Adrenal gland (tissue), 19 donors: ENCODE measurements at regions of chr1 and their contacts with region 1.

Region 1: GRCh38 chr1:172745014-172745413 is 86.1 kb downstream of the FASLG start:
- DNase-seq: peak in 5 of 7 donors; percentile 25 to 45 (median 36)
- H3K4me3 ChIP-seq: no peak overlapping the region
- H3K27ac ChIP-seq: no peak overlapping the region
- H3K4me1 ChIP-seq: peaks cover 0 to 18% of the 10 kb centered on the region in 2 donors
- H3K27me3 ChIP-seq: peaks cover 11% of the 10 kb centered on the region
- CTCF ChIP-seq: peak; percentile 40 to 80 (median 63)
- POLR2A ChIP-seq: no peak

Region 2: DNA sequence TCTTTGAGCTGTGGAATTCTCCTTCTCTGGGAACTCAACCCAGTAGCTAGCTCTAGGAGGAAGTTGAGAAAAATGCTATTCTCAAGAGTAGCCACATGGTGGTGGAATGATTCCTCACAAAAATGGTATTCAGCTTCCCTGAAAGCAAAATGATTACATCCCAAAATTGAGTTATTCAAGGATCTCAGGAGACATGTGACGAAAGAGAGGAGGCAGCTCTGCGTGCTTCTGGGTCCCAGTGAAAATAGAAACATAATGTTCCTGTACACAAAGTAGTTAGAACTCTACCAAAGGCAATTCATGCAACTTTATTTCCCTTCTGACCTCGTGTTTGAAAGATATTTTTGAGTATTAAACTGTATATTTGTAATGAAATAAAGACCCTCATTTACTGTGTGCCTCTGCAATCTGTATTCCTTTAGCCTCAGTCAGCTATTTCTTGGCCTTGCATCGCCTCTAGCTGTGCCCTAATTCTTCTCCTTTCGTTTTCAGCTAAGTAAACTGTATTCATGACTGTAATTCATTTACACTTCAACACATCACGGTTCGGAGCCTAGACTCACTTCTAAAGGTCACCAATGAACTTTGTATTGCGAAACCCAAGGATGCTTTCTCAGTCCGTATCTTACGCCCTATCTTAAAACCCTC is 81.2 kb after region 1 on chr1:
- intact Hi-C with region 1: loop called in 1 of 2 experiments (anchors 10 kb)
- DNase-seq: peak; percentile 21 to 71 (median 36)
- H3K4me3 ChIP-seq: peak overlapping the region in 1 of 4 donors; percentile 46
- H3K27ac ChIP-seq: peak overlapping the region in 2 of 5 donors; percentile 53 to 59
- H3K4me1 ChIP-seq: peaks cover 0 to 7% of the 10 kb centered on the region in 2 donors
- H3K27me3 ChIP-seq: no peaks in the 10 kb centered on the region
- CTCF ChIP-seq: peak; percentile 35 to 80 (median 66)
- POLR2A ChIP-seq: no peak

Region 3: DNA sequence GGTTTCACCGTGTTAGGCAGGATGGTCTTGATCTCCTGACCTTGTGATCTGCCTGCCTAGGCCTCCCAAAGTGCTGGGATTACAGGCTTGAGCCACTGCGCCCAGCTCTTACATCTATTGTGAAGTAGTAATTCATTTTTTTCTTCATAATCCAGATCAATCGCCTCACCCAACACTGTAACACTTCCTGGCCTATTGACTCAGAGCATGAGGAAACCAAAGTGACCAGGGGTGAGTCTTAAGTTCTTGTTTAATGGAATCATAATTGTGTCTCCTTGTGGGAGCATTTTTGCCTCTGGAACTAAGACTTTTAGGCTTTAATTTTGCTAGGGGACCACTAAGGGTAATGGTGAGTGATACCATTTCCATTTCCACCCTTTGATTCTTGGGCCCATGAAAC is 278.3 kb after region 1 on chr1:
- intact Hi-C with region 1: no loop called
- DNase-seq: no peak
- H3K4me3 ChIP-seq: no peak overlapping the region
- H3K27ac ChIP-seq: no peak overlapping the region
- H3K4me1 ChIP-seq: no peaks in the 10 kb centered on the region
- H3K27me3 ChIP-seq: no peaks in the 10 kb centered on the region
- CTCF ChIP-seq: no peak
- POLR2A ChIP-seq: no peak